Right ventricle myocardium superior (tissue), 1 donor: ENCODE measurements at regions of chr12 and their contacts with region 1.

Region 1: DNA sequence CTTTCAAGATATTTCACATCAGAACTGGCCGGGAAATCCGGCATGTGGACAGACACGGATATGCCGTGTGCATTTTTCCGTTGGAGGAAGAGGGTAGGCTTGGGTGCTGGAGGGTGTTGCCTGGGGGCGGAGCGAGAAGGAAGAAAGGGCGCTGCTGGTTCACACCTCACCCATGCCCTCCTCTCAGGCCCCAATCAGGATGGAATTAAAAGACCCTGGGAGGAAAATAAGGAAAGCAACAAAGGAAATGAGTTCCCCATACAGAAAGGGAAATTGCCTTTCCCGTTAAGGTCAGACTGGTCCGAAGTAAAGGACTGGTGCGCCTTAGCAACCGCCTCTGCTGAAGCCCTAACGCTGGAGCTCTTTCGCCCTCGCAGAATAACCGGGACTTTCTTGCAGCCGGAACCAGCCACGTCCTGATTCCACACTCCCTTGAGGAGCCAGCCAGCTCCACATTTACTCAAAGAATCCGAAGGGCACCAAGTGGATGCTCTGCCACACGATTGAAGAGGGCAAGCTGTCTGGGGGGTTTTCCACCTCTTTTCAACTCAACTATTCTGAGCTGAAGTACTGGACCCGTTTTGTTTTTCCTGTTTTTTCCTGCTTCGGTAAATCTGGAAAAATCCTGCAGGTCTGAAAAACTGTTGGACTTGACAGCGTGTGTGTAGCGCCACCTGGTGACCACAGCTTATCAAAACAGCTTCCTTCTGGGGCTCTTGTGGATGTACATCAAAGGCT is 37.7 kb upstream of the BCL2L14 start:
- DNase-seq: peak; percentile 77
- ATAC-seq: peak; percentile 91

Region 2: GRCh38 chr12:11524446-11524845 is 508.6 kb before region 1 on chr12:
- intact Hi-C with region 1: no loop called
- DNase-seq: no peak
- ATAC-seq: no peak

Region 3: GRCh38 chr12:11581179-11581755 is 451.8 kb before region 1 on chr12:
- intact Hi-C with region 1: loop called (anchors 2 kb)
- DNase-seq: no peak
- ATAC-seq: peak; percentile 65

Region 4: DNA sequence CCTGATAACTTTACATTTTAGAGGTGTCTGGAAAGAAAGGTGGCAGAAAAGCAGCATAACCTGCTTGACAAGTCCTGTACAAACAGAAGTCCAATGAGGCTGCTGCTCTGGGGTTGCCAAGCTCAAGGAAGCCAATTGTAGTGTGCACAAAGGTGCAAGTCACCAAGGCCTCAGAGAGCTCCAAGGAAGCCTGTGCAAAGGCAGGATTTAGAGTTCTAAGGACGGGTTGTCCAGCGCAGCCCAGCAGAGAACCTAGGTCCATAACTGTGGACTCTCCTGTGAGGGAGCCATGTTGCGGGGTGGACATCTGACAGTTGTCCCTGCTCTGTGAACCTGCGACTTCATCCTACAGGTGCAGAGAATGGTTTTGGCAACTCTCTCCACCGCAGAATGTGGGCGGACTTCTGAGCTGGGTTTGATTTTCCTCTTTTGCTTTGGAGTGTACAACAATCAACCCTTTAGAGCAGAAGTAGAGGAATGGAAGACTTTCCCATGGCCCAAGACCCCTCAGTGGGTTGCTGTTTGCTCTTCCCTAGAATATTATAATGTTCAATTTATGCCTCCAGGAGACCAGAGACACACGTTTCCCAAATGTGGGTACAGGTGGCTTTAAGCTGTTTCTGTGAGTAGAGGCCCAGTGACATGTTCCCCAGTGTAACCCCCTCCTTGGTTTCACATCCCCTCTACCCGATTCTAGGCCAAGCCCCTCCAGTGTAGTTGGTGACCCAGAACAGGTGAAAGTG is 302.6 kb before region 1 on chr12:
- intact Hi-C with region 1: no loop called
- DNase-seq: no peak
- ATAC-seq: no peak

Region 5: DNA sequence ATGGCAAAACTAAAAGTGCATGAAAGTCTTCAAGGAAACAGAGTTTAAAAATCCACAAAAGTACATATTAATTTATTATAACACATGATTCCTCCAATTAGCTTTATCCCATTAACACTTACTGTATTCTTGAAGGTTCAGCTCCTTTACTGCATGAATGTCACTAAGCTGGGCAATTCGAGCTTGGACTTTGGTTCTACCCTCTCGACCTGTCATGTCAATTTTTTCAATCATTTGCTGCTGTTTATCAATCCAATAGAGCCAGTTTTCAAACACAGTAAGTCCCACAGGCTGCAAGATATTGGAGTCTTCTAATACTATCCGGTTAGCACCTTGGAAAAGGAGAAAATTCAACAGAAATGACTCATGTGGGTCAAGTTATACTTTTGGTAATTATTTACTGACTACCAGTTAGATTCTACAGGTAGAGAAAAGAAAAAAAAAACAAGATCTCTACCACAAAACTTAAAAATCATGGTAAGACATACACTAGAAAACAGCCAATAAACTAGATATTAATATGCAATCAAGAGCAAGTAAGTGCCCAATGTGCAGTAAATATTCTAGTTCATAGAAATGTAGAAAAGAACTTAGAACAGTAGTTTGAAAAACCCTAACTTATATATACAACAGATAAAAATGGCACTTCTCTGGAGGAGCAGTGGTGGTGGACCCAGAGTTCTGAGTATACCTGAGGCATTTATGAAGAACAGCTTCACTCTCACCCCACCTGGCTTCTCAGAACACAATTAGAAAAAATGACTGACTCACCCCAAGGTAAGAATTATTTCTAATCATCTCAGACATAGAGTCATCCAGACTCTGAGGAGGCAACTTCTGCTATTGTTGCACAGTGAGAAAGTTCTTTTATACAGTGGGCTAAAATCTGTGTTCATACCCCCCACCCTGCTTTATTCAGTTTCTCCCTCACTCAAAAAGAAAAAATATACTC is 105.5 kb after region 1 on chr12:
- intact Hi-C with region 1: no loop called
- DNase-seq: no peak
- ATAC-seq: no peak